ENCODE measurements at regions of chr11 and their contacts with region 1.

Region 1: DNA sequence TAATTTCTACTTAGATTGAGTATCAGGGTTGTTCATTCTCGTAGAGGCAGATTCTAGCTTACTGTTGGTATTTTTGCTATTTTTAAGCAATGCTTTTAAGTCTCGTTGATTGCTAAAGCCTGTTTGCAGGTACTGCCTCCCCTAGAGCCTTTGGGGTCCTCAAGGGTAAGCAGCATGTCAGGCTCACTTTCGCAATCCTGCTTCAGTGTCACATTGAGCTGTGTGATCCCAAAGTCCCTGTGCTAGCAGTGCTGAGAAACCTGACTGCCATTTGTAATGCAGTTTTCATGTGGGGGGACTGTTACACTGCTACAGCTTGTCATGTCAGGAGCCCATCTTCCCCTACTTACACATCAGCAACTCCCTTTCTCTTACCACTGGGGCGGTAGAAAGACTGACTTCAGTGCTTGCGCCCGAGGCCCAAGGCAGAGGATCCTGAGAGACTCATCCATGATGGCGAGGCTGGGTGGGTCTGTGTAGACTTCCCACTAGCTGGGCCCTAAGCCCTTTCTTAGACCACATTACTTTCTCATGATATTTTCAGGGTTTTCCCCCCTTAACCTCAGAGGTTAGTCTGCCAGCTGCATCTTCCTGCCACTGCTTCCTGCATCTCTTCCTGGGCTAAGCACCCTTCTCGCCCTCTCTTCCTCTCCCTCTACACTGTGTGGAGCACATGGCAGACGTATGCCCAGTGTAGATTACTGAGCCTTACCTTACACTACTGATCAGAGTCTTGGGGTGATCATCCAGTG is 40.8 kb upstream of the ST14 start:
- DNase-seq: peak; percentile 35
- H3K4me3 Mint-ChIP-seq: no peak overlapping the region
- H3K27ac Mint-ChIP-seq: no peak overlapping the region
- H3K4me1 Mint-ChIP-seq: peaks cover 46% of the 10 kb centered on the region
- H3K27me3 Mint-ChIP-seq: peaks cover 7% of the 10 kb centered on the region

Region 2: GRCh38 chr11:129922674-129923073 is 196.1 kb before region 1 on chr11:
- CTCF ChIA-PET with region 1: interaction called, 4 read pairs
- intact Hi-C with region 1: loop called (anchors 1 kb)
- DNase-seq: no peak
- H3K4me3 Mint-ChIP-seq: no peak overlapping the region
- H3K27ac Mint-ChIP-seq: no peak overlapping the region
- H3K4me1 Mint-ChIP-seq: peaks cover 8% of the 10 kb centered on the region
- H3K27me3 Mint-ChIP-seq: no peaks in the 10 kb centered on the region

Measured in activated naive CD4-positive, alpha-beta T cell treated with anti-CD3 and anti-CD28 coated beads for 36 hours (primary cell).